ENCODE measurements at regions of chr18 and their contacts with region 1.

Region 1: GRCh38 chr18:8696749-8697211 is 8.6 kb upstream of the MTCL1 start:
- DNase-seq: peak; percentile 77
- ATAC-seq: peak; percentile 91
- H3K4me3 ChIP-seq: no peak overlapping the region
- H3K4me3 Mint-ChIP-seq: no peak overlapping the region
- H3K27ac ChIP-seq: peak overlapping the region in 1 of 2 donors; percentile 87
- H3K27ac Mint-ChIP-seq: peak overlapping the region; percentile 59
- H3K4me1 ChIP-seq: peaks cover 13 to 17% of the 10 kb centered on the region in 2 donors
- H3K4me1 Mint-ChIP-seq: peaks cover 13% of the 10 kb centered on the region
- H3K27me3 ChIP-seq: peaks cover 0 to 4% (median 0%) of the 10 kb centered on the region in 4 experiments
- H3K27me3 Mint-ChIP-seq: peaks cover 5% of the 10 kb centered on the region
- CTCF ChIP-seq: peak; percentile 97

Region 2: GRCh38 chr18:8484951-8485350 is 211.8 kb before region 1 on chr18:
- CTCF ChIA-PET with region 1: no interaction called
- POLR2A ChIA-PET with region 1: no interaction called
- intact Hi-C with region 1: no loop called
- DNase-seq: no peak
- ATAC-seq: no peak
- H3K4me3 ChIP-seq: no peak overlapping the region
- H3K4me3 Mint-ChIP-seq: no peak overlapping the region
- H3K27ac ChIP-seq: no peak overlapping the region
- H3K27ac Mint-ChIP-seq: no peak overlapping the region
- H3K4me1 ChIP-seq: no peaks in the 10 kb centered on the region
- H3K4me1 Mint-ChIP-seq: no peaks in the 10 kb centered on the region
- H3K27me3 ChIP-seq: peaks cover 0 to 4% (median 0%) of the 10 kb centered on the region in 4 experiments
- H3K27me3 Mint-ChIP-seq: peaks cover 7% of the 10 kb centered on the region
- CTCF ChIP-seq: no peak

Region 3: GRCh38 chr18:8654503-8655451 is 42.0 kb before region 1 on chr18:
- CTCF ChIA-PET with region 1: interaction called, 6 read pairs
- POLR2A ChIA-PET with region 1: no interaction called
- intact Hi-C with region 1: loop called (anchors 2 kb)
- DNase-seq: peak; percentile 52
- ATAC-seq: peak; percentile 49
- H3K4me3 ChIP-seq: no peak overlapping the region
- H3K4me3 Mint-ChIP-seq: no peak overlapping the region
- H3K27ac ChIP-seq: no peak overlapping the region
- H3K27ac Mint-ChIP-seq: no peak overlapping the region
- H3K4me1 ChIP-seq: no peaks in the 10 kb centered on the region
- H3K4me1 Mint-ChIP-seq: peaks cover 6% of the 10 kb centered on the region
- H3K27me3 ChIP-seq: no peaks in the 10 kb centered on the region
- H3K27me3 Mint-ChIP-seq: no peaks in the 10 kb centered on the region
- CTCF ChIP-seq: peak; percentile 96

Region 4: GRCh38 chr18:8786478-8787370 is 89.9 kb after region 1 on chr18:
- CTCF ChIA-PET with region 1: interaction called, 12 read pairs
- POLR2A ChIA-PET with region 1: no interaction called
- intact Hi-C with region 1: no loop called
- DNase-seq: peak; percentile 68
- ATAC-seq: peak; percentile 53
- H3K4me3 ChIP-seq: peak overlapping the region in 3 of 5 experiments; percentile 2 to 16 (median 3)
- H3K4me3 Mint-ChIP-seq: peak overlapping the region; percentile 74
- H3K27ac ChIP-seq: no peak overlapping the region
- H3K27ac Mint-ChIP-seq: peak overlapping the region; percentile 61
- H3K4me1 ChIP-seq: peaks cover 9 to 11% of the 10 kb centered on the region in 2 donors
- H3K4me1 Mint-ChIP-seq: peaks cover 8% of the 10 kb centered on the region
- H3K27me3 ChIP-seq: no peaks in the 10 kb centered on the region
- H3K27me3 Mint-ChIP-seq: no peaks in the 10 kb centered on the region
- CTCF ChIP-seq: no peak

Region 5: GRCh38 chr18:8988261-8988871 is 291.6 kb after region 1 on chr18:
- CTCF ChIA-PET with region 1: interaction called, 57 read pairs
- POLR2A ChIA-PET with region 1: no interaction called
- intact Hi-C with region 1: loop called (anchors 1 kb)
- DNase-seq: peak; percentile 76
- ATAC-seq: peak; percentile 79
- H3K4me3 ChIP-seq: no peak overlapping the region
- H3K4me3 Mint-ChIP-seq: no peak overlapping the region
- H3K27ac ChIP-seq: no peak overlapping the region
- H3K27ac Mint-ChIP-seq: no peak overlapping the region
- H3K4me1 ChIP-seq: no peaks in the 10 kb centered on the region
- H3K4me1 Mint-ChIP-seq: no peaks in the 10 kb centered on the region
- H3K27me3 ChIP-seq: no peaks in the 10 kb centered on the region
- H3K27me3 Mint-ChIP-seq: peaks cover 7% of the 10 kb centered on the region
- CTCF ChIP-seq: peak; percentile 89

Measured in B cell (primary cell).